Activated naive CD4-positive, alpha-beta T cell treated with anti-CD3 and anti-CD28 coated beads for 36 hours (primary cell): ENCODE measurements at regions of chr13 and their contacts with region 1.

Region 1: GRCh38 chr13:97221989-97222700 is at the start of gene MBNL2:
- DNase-seq: peak; percentile 93
- H3K4me3 Mint-ChIP-seq: peak within 1 kb of the TSS; percentile 79
- H3K27ac Mint-ChIP-seq: peak within 1 kb of the TSS; percentile 87
- H3K4me1 Mint-ChIP-seq: peaks cover 33% of the 10 kb centered on the region
- H3K27me3 Mint-ChIP-seq: no peaks in the 10 kb centered on the region
- total RNA-seq, gene MBNL2: 16.8 to 18.8 TPM

Region 2: GRCh38 chr13:97109841-97110492 is 112.2 kb before region 1 on chr13:
- CTCF ChIA-PET with region 1: interaction called, 33 read pairs
- intact Hi-C with region 1: no loop called
- DNase-seq: peak; percentile 79
- H3K4me3 Mint-ChIP-seq: peak overlapping the region; percentile 14
- H3K27ac Mint-ChIP-seq: no peak overlapping the region
- H3K4me1 Mint-ChIP-seq: peaks cover 11% of the 10 kb centered on the region
- H3K27me3 Mint-ChIP-seq: peaks cover 12% of the 10 kb centered on the region

Region 3: DNA sequence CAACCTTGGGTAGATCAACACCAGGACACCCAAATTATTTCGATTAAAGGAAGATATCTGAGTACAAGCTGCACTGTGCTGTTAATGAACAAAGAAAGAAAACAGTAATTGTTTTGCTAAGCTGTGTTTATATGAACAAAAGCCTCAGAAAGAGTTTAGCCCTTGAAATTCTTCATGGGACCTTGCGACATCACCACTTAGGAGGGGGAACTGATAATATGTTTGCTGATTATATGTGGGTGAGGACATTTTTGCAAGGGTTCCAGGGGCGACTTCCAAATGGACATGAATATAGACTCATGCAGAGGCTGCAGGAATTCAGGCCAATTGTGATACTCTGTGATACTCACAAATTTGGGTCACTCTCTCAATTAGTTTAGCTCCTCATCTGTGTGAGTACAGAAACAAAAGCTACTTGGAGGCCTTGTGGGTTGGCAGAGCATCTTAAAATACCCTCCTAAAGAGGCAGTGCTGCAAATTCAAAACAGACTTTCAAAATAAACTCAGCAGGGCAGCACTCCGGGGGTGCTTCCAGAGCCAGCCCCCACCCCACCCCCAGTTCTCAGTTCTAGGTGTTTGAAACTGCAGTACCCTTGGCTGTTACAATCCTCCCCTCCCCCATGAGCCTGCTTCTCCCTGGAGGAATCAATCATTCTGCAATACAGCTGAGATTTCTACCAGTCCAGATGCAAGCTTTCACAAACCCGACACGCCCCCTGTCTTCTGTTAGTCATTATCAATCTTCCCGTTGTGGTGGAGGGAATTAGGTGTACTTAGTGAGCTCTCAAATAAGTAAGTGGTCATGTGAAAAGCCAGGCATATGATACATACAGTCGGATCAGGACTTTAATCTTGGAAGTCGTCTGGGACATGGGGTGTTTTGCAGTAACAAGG is 97.0 kb before region 1 on chr13:
- CTCF ChIA-PET with region 1: interaction called, 3 read pairs
- intact Hi-C with region 1: loop called (anchors 1 kb)
- DNase-seq: peak; percentile 44
- H3K4me3 Mint-ChIP-seq: no peak overlapping the region
- H3K27ac Mint-ChIP-seq: no peak overlapping the region
- H3K4me1 Mint-ChIP-seq: peaks cover 18% of the 10 kb centered on the region
- H3K27me3 Mint-ChIP-seq: peaks cover 24% of the 10 kb centered on the region

Region 4: DNA sequence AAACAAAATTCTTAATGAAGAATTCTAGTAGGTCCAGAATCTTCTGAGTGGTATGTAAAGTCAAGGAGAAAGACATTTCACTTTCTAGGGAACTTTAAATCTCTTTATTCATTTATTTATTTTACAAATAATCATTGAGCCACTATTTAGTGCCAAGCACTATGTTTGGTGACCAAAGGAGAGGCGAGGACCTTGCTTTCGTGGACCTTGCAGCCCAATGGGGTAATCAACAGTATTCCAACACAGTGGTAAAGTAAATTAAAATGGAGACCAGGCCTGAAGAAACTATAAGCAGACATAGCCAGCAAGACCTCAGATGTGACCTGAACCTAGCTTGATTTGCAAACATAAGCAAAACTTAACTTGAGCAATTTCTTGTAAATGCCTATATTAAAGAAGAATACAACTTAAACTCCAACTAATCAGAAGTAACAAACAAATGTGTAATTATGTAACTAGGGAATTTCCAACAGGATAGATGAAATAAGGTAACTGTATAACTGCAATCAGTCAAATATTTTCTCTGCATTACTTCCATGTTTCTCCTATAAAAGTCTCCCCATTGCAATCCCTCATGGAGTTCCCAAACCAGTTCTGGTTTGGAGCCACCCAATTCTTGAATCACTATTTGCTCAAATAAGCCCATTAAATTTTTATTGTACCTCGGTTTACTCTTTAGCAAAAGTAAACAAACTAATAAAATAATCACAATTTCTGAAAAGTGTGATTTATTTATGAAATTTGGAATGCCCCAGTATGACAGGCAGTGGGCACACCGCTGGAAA is 67.6 kb after region 1 on chr13:
- CTCF ChIA-PET with region 1: interaction called, 3 read pairs
- intact Hi-C with region 1: loop called (anchors 1 kb)
- DNase-seq: no peak
- H3K4me3 Mint-ChIP-seq: no peak overlapping the region
- H3K27ac Mint-ChIP-seq: peak overlapping the region; percentile 60
- H3K4me1 Mint-ChIP-seq: peaks cover 34% of the 10 kb centered on the region
- H3K27me3 Mint-ChIP-seq: no peaks in the 10 kb centered on the region

Region 5: DNA sequence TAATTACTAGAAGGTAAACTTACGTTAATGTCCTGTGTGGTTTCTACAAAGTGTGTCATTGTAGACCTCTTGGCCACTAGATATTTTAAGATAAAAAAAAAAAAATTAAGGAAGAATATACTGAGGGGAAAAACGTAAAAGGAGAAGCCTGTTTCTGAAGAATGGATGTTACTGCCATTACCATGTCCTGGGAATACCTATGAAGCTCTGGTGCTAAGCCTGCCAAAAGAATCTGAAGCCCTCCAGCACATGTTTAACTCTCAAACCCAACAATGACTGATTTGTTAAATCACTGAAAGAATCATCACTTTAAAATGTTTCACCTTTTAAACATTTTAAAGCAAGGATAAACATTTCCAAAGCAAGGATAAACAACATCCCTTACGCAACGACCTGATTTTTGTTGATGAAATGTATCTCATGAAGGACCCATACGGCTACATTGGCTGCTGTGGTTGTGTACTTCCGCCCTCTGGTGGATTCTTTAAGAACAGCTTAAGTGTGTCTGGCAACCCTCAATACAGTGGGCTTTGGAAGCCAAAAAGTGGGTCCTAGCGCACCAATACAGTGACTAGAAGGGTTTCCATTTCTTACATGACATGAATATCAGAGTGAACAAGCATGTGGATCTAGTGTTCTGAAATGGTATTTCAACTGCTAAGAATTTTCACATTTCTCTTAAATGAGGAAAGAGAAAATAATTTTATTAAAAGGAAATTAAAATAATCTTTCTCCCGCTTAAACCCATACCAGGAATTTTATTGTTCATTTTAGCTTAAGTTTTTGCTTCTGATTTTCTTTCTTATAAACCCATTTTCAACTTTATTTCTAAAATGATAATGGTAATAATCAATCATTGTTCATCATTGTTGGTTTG is 137.3 kb after region 1 on chr13:
- CTCF ChIA-PET with region 1: interaction called, 4 read pairs
- intact Hi-C with region 1: loop called (anchors 2 kb)
- DNase-seq: peak; percentile 60
- H3K4me3 Mint-ChIP-seq: no peak overlapping the region
- H3K27ac Mint-ChIP-seq: no peak overlapping the region
- H3K4me1 Mint-ChIP-seq: no peaks in the 10 kb centered on the region
- H3K27me3 Mint-ChIP-seq: no peaks in the 10 kb centered on the region

Region 6: DNA sequence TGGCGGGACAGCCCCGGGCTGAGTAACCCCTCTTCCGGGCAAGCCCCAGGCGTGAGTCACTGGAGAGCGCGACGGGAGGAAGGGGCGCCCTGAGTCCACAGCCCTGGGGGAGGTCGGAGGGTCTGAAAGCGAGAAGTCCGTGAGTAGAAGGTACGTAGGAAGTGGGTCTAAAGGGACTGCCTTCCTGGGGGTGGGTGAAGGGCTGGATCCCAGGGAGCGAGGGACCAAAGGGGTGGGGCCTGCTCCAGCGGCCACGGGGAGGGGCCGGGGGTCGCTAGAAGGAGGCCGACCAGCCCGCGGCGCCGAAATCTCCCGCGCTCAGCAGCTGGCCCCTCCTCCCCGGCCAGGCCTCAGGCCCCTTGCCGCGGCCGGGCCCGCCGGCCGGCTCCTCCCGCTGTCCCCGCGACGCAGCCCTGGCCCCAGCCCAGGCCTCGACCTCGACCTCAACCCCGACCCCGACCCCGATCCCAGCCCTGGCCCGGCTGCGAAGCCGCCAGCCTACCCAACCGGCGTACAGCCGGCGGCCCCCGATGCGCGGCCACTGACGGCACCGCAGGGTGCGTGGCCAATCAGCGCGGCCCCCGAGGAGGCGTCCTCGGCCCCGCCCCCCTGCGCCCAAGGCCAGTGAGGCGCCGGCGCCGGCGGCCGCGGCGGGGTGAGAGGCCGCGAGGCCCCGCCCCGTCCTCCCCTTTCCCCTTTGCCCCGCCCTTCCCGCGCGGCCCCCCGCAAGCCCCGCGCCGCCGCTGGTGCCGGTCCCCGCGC is 753.9 kb after region 1 on chr13:
- CTCF ChIA-PET with region 1: no interaction called
- intact Hi-C with region 1: loop called (anchors 1 kb)
- DNase-seq: peak; percentile 89
- H3K4me3 Mint-ChIP-seq: peak overlapping the region; percentile 92
- H3K27ac Mint-ChIP-seq: peak overlapping the region; percentile 97
- H3K4me1 Mint-ChIP-seq: peaks cover 28% of the 10 kb centered on the region
- H3K27me3 Mint-ChIP-seq: no peaks in the 10 kb centered on the region

Region 7: GRCh38 chr13:99057310-99057975 is 1835.3 kb after region 1 on chr13:
- CTCF ChIA-PET with region 1: no interaction called
- intact Hi-C with region 1: loop called (anchors 10 kb)
- DNase-seq: no peak
- H3K4me3 Mint-ChIP-seq: no peak overlapping the region
- H3K27ac Mint-ChIP-seq: no peak overlapping the region
- H3K4me1 Mint-ChIP-seq: peaks cover 68% of the 10 kb centered on the region
- H3K27me3 Mint-ChIP-seq: no peaks in the 10 kb centered on the region